Dorsolateral prefrontal cortex (tissue), 120 donors: ENCODE measurements at regions of chr7 and their contacts with region 1.

Region 1: GRCh38 chr7:150756858-150757257 is 19.6 kb downstream of the GIMAP5 start:
- DNase-seq: no peak
- H3K4me3 ChIP-seq: no peak overlapping the region
- H3K27ac ChIP-seq: peak overlapping the region in 1 of 59 donors; percentile 11
- H3K27me3 ChIP-seq: peaks cover 0 to 8% (median 0%) of the 10 kb centered on the region in 45 donors
- CTCF ChIP-seq: peak; percentile 24 to 76 (median 58)

Region 2: GRCh38 chr7:150448789-150449147 is 308.1 kb before region 1 on chr7:
- intact Hi-C with region 1: loop called (anchors 2 to 5 kb)
- DNase-seq: peak; percentile 42 to 81 (median 69)
- H3K4me3 ChIP-seq: peak overlapping the region in 3 of 59 donors; percentile 2 to 16 (median 3)
- H3K27ac ChIP-seq: peak overlapping the region in 7 of 59 donors; percentile 10 to 48 (median 31)
- H3K27me3 ChIP-seq: peaks cover 0 to 26% (median 0%) of the 10 kb centered on the region in 45 donors
- CTCF ChIP-seq: peak; percentile 74 to 97 (median 89)